Activated CD8-positive, alpha-beta T cell treated with anti-CD3 and anti-CD28 coated beads, Interleukin-2, amount 10 ng/mL, durations not matched to agents 7 days and 5 days (primary cell): ENCODE measurements at regions of chr1 and their contacts with region 1.

Region 1: DNA sequence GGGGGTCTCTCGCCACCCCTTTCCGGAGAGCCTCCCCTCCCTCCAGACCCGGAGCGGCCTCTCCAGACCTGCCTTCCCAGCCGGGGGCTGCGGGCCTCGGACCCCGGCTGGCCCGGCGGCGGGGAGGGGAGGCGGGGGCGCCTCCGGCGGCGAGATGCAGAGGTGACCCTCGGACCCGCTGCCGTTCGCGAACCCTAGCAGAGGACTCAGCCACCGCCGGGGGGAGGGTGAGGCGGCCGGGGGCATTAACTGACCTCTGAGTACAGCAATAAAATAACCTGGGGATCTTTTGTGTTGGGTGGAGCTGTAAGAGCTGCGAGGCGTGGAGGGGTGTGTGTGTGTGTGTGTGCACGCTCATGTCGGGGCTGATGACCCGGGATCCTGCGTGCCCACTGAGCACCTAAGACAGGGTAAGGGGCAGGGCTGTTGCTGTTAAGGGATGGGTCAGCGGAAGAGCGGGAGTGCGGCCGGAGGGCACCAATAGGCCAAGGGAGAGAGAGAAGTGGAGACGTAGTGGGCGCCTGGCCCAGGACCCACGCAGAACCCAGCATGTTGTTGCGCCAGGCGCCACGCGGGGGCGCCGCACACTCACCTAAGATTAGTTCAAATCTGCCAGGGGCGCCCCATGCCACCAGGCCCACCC is 6.3 kb downstream of the HAPLN2 start:
- DNase-seq: peak; percentile 70
- ATAC-seq: peak; percentile 57
- H3K4me3 Mint-ChIP-seq: peak overlapping the region; percentile 40
- H3K27ac Mint-ChIP-seq: no peak overlapping the region
- H3K4me1 Mint-ChIP-seq: peaks cover 12% of the 10 kb centered on the region
- H3K27me3 Mint-ChIP-seq: peaks cover 47% of the 10 kb centered on the region

Region 2: GRCh38 chr1:156591432-156592157 is 34.0 kb before region 1 on chr1 and contains the start of gene NAXE:
- CTCF ChIA-PET with region 1: interaction called, 10 read pairs
- POLR2A ChIA-PET with region 1: interaction called, 3 read pairs
- DNase-seq: peak; percentile 74
- ATAC-seq: peak; percentile 96
- H3K4me3 Mint-ChIP-seq: peak within 1 kb of the TSS; percentile 82
- H3K27ac Mint-ChIP-seq: peak within 1 kb of the TSS; percentile 87
- H3K4me1 Mint-ChIP-seq: peaks cover 24% of the 10 kb centered on the region
- H3K27me3 Mint-ChIP-seq: no peaks in the 10 kb centered on the region
- total RNA-seq, gene NAXE: 54.3 to 60.3 TPM

Region 3: GRCh38 chr1:156641761-156642264 is 16.3 kb after region 1 on chr1 and contains the start of gene BCAN:
- CTCF ChIA-PET with region 1: interaction called, 52 read pairs
- POLR2A ChIA-PET with region 1: interaction called, 3 read pairs
- DNase-seq: no peak
- ATAC-seq: peak; percentile 30
- H3K4me3 Mint-ChIP-seq: peak within 1 kb of the TSS; percentile 29
- H3K27ac Mint-ChIP-seq: no peak within 1 kb of the TSS
- H3K4me1 Mint-ChIP-seq: peaks cover 37% of the 10 kb centered on the region
- H3K27me3 Mint-ChIP-seq: peaks cover 77% of the 10 kb centered on the region
- total RNA-seq, gene BCAN: not detected

Region 4: DNA sequence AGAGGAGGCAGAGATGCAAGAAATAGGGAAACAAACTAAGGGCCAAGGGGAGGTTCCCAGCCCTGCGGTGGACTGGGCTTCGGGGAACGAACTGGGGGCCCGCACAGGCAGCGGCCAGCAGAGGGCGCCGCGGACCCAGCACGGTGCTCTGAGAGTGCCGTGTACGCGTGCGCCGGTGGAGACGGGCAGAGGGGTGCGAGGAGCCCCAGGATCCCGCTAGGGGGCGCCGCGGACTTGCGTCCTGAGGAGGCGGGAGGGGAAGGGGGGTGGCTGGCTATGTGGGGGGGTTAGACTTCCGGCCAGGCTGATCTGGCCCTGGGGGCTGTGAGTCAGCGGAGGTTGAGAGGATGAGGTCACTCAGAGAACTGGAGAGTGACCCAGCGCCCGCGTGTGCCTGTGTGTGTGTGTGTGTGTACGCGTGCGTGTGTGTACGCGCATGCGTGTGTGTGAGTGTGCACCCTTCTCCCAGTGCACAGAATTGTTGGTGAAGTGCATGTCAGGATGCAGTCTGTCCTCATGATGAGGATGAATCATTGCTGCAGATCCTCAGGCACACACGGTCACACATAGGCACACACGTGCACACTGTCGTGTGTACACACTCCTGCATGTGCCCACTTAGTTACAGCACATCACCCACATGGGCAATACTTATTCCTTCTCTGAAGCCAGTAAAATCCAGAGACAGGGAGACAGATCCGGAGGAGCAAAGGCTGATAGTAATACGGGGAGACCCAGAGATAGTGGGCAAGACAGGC is 34.6 kb after region 1 on chr1:
- CTCF ChIA-PET with region 1: interaction called, 240 read pairs
- POLR2A ChIA-PET with region 1: interaction called, 3 read pairs
- DNase-seq: peak; percentile 96
- ATAC-seq: peak; percentile 87
- H3K4me3 Mint-ChIP-seq: peak overlapping the region; percentile 72
- H3K27ac Mint-ChIP-seq: peak overlapping the region; percentile 90
- H3K4me1 Mint-ChIP-seq: peaks cover 77% of the 10 kb centered on the region
- H3K27me3 Mint-ChIP-seq: peaks cover 29% of the 10 kb centered on the region

Region 5: GRCh38 chr1:156677616-156678596 is 52.3 kb after region 1 on chr1:
- CTCF ChIA-PET with region 1: interaction called, 35 read pairs
- POLR2A ChIA-PET with region 1: no interaction called
- DNase-seq: peak; percentile 41
- ATAC-seq: peak; percentile 43
- H3K4me3 Mint-ChIP-seq: no peak overlapping the region
- H3K27ac Mint-ChIP-seq: no peak overlapping the region
- H3K4me1 Mint-ChIP-seq: peaks cover 16% of the 10 kb centered on the region
- H3K27me3 Mint-ChIP-seq: peaks cover 69% of the 10 kb centered on the region

Region 6: DNA sequence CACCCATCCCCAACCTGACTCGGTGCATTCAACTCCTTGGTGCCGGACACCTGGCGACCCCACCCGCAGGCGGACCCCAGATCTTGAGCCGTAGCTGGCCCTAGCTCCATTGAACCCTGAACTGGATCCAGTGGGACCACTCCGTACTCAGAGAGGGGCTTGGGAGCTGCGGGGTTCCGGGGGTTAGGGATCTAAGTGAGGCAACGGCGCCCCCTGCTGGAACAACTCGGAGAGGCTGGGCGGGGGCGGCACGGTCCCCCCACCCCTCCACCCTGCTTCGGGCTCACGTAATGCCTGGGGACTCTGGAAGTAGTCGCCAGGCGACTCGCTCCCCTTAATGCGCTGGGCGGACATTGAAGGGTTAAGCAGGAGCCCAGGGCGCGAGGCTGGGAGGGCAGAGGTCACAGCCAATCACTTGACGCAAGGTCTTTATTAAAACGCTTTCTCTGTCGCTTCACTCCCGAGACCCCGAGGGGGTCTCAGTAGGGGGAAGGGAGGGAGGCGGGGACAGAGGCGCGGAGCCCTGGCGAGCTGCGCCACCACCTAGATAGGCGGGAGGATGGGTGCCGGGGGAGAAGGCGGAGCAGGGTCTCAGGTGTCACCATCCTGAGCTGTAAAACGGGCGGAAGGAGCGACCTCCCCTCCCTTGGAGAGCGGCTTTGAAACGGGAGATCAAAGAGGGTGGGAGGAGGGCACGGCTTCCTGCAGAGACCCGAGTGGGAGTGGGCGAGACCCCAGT is 80.5 kb after region 1 on chr1:
- CTCF ChIA-PET with region 1: interaction called, 18 read pairs
- POLR2A ChIA-PET with region 1: no interaction called
- DNase-seq: peak; percentile 70
- ATAC-seq: peak; percentile 65
- H3K4me3 Mint-ChIP-seq: peak overlapping the region; percentile 71
- H3K27ac Mint-ChIP-seq: no peak overlapping the region
- H3K4me1 Mint-ChIP-seq: peaks cover 28% of the 10 kb centered on the region
- H3K27me3 Mint-ChIP-seq: peaks cover 33% of the 10 kb centered on the region